Heart left ventricle (tissue), 16 donors: ENCODE measurements at regions of chr3 and their contacts with region 1.

Region 1: DNA sequence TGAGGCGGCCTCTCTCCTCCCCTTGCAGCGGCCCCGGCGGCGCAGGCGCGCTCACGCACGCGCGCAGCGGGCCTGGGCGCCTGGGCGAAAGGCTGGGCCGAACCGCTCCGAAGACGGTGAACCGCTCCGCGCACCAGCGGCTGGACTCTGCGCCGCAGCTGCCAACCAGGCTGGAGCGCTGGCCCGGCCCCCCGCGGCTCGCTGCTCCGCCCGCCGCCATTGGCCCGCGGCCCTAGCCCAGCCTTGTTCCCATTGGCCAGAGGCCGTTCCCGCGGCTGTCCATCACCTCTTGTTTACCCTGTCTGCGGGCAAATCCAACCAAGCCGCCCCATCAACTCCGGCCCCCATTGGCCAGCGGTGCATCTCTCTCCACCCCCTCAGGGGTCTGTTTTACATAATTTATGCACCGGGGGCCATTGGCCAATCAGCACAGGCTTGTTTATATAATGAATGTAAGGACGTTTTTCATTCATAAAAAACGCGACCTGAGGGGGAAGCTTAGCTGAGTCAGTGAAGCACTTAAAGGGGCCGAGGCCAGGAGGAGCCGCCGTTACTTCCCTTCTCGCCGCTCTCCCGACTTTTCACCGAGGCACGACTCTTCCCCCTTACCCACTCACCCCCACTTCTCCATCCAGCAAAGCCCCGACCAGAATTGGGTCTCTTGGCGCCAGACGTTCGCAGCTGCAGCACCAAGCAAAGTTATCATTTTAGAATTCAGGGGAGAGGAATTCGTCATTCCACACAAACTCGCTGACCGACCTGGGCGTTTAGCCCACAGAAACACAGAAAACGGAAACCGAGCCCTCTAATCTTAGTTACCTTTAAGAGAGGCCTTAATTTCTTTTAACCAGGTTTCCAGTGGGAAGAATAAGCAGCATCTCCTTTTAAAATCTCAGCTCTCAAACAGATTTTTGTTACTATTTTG is at the start of gene ETV5:
- DNase-seq: peak; percentile 99 to 100 (median 100)
- ATAC-seq: peak; percentile 98 to 99 (median 99)
- H3K4me3 ChIP-seq: peak within 1 kb of the TSS; percentile 38 to 95 (median 88)
- H3K27ac ChIP-seq: peak within 1 kb of the TSS; percentile 51 to 91 (median 82)
- H3K4me1 ChIP-seq: peaks cover 0 to 35% (median 13%) of the 10 kb centered on the region in 12 donors
- H3K27me3 ChIP-seq: peaks cover 0 to 22% (median 0%) of the 10 kb centered on the region in 9 donors
- CTCF ChIP-seq: peak in 1 of 12 donors; percentile 23
- POLR2A ChIP-seq: peak; percentile 13 to 82
- total RNA-seq, gene ETV5: 4.2 to 29.9 (median 6.9) TPM

Region 2: GRCh38 chr3:186209810-186210752 is 100.9 kb after region 1 on chr3:
- intact Hi-C with region 1: loop called in 1 of 10 experiments (anchors 5 kb)
- DNase-seq: peak; percentile 66 to 86 (median 74)
- ATAC-seq: peak; percentile 87 to 92 (median 90)
- H3K4me3 ChIP-seq: peak overlapping the region in 2 of 12 donors; percentile 13 to 14
- H3K27ac ChIP-seq: peak overlapping the region; percentile 17 to 81 (median 74)
- H3K4me1 ChIP-seq: peaks cover 0 to 56% (median 26%) of the 10 kb centered on the region in 12 donors
- H3K27me3 ChIP-seq: no peaks in the 10 kb centered on the region
- CTCF ChIP-seq: no peak
- POLR2A ChIP-seq: no peak

Region 3: GRCh38 chr3:186241910-186242821 is 133.0 kb after region 1 on chr3:
- intact Hi-C with region 1: loop called in 2 of 10 experiments (anchors 1 to 10 kb)
- DNase-seq: peak; percentile 73 to 86 (median 80)
- ATAC-seq: peak; percentile 92 to 97 (median 96)
- H3K4me3 ChIP-seq: peak overlapping the region in 11 of 12 donors; percentile 9 to 56 (median 33)
- H3K27ac ChIP-seq: peak overlapping the region; percentile 11 to 82 (median 69)
- H3K4me1 ChIP-seq: peaks cover 0 to 44% (median 23%) of the 10 kb centered on the region in 12 donors
- H3K27me3 ChIP-seq: no peaks in the 10 kb centered on the region
- CTCF ChIP-seq: peak; percentile 32 to 66 (median 45)
- POLR2A ChIP-seq: no peak

Region 4: GRCh38 chr3:186298876-186299275 is 189.7 kb after region 1 on chr3:
- intact Hi-C with region 1: no loop called
- DNase-seq: no peak
- ATAC-seq: peak in 1 of 4 donors; percentile 24
- H3K4me3 ChIP-seq: no peak overlapping the region
- H3K27ac ChIP-seq: no peak overlapping the region
- H3K4me1 ChIP-seq: no peaks in the 10 kb centered on the region
- H3K27me3 ChIP-seq: no peaks in the 10 kb centered on the region
- CTCF ChIP-seq: no peak
- POLR2A ChIP-seq: no peak

Region 5: DNA sequence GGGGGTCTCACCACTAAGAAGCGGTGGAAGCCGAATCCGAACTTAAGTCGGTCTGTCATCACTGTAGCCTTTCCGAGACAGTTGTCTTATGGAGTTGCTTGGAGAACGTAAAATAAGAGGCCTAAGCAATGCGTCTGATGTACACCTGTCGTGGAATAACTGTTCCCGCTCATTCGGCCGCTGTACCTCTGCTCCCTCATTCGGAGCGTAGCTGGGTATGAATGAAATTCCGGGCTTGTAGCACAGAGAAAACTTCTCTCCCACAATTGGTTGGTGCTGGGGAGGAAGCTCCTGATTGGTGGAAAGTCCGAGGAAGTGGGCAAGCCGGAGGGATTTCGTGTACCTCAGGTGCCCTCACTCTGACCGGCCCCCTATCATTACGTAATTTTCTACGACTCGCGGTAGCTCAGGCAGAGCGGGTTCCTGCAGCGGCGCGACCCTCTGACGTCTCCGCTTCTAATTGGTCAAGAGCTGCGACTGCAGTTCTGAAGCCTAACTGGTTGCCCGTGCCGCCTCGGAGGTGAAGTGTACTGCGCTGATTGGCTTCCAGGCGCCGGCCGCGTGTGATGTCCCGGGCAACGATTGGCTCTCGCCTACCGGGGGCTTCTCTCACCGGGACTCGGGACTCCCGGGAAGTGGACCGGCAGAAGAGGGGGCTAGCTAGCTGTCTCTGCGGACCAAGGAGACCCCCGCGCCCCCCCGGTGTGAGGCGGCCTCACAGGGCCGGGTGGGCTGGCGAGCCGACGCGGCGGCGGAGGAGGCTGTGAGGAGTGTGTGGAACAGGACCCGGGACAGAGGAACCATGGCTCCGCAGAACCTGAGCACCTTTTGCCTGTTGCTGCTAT is 461.1 kb after region 1 on chr3 and contains the start of gene DNAJB11:
- intact Hi-C with region 1: loop called in 3 of 10 experiments (anchors 10 kb)
- DNase-seq: peak; percentile 99 to 100 (median 99)
- ATAC-seq: peak; percentile 94 to 97 (median 96)
- H3K4me3 ChIP-seq: peak within 1 kb of the TSS; percentile 71 to 99 (median 90)
- H3K27ac ChIP-seq: peak within 1 kb of the TSS; percentile 43 to 95 (median 88)
- H3K4me1 ChIP-seq: peaks cover 5 to 47% (median 32%) of the 10 kb centered on the region in 12 donors
- H3K27me3 ChIP-seq: no peaks in the 10 kb centered on the region
- CTCF ChIP-seq: no peak
- POLR2A ChIP-seq: peak in 1 of 2 donors; percentile 68
- total RNA-seq, gene DNAJB11: 17.3 to 37.7 (median 25.2) TPM